SK-MEL-5 (cell line): ENCODE measurements at regions of chr2 and their contacts with region 1.

Region 1: GRCh38 chr2:155842103-155842502 is 490.4 kb downstream of the NR4A2 start:
- DNase-seq: peak; percentile 47

Region 2: GRCh38 chr2:155377266-155377680 is 464.8 kb before region 1 on chr2:
- in situ Hi-C with region 1: loop called (anchors 25 kb)
- DNase-seq: peak; percentile 64

Region 3: GRCh38 chr2:156077041-156077735 is 235.1 kb after region 1 on chr2:
- in situ Hi-C with region 1: no loop called
- DNase-seq: no peak